PC-3 (cell line): ENCODE measurements at regions of chr11 and their contacts with region 1.

Region 1: DNA sequence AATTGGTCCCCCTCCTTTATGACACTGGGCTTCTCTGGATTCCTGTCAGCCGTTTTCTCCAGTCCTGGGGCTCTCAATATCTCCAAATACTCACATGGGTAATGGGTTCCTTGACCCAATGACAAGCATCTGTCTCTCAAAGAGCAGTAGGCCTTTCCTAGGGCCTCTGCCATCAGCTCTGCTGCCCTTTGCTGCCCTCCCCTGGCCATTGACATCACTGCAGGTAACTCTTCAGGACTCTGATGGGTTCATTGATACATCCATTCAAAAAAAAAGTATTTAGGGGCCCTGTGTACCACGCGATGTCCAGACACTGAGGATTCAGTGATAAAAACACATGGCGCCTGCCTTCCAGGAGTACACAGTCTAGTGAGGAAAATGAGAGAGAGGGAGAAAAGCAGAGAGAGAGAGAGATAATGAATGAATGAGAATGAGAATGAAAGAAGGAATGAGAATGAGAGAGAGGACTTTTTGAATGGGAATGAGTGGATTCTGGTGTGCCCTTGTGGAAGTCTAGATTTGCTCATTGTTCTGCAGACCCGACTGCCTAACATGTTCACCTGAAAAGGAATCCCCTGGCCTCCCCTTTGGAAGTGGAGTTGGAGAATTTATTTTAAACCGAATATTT is 42.6 kb upstream of the OLFML1 start:
- DNase-seq: peak; percentile 81
- ATAC-seq: peak; percentile 94
- H3K4me3 ChIP-seq: no peak overlapping the region
- H3K27ac ChIP-seq: no peak overlapping the region
- H3K4me1 ChIP-seq: no peaks in the 10 kb centered on the region
- H3K27me3 ChIP-seq: no peaks in the 10 kb centered on the region
- CTCF ChIP-seq: peak; percentile 92

Region 2: GRCh38 chr11:7098235-7098832 is 344.4 kb before region 1 on chr11:
- CTCF ChIA-PET with region 1: no interaction called
- POLR2A ChIA-PET with region 1: no interaction called
- intact Hi-C with region 1: loop called (anchors 1 kb)
- DNase-seq: peak; percentile 72
- ATAC-seq: peak; percentile 73
- H3K4me3 ChIP-seq: no peak overlapping the region
- H3K27ac ChIP-seq: no peak overlapping the region
- H3K4me1 ChIP-seq: no peaks in the 10 kb centered on the region
- H3K27me3 ChIP-seq: peaks cover 37% of the 10 kb centered on the region
- CTCF ChIP-seq: peak; percentile 86

Region 3: GRCh38 chr11:7143908-7144307 is 298.8 kb before region 1 on chr11:
- CTCF ChIA-PET with region 1: no interaction called
- POLR2A ChIA-PET with region 1: no interaction called
- intact Hi-C with region 1: loop called (anchors 1 kb)
- DNase-seq: peak; percentile 56
- ATAC-seq: peak; percentile 74
- H3K4me3 ChIP-seq: no peak overlapping the region
- H3K27ac ChIP-seq: no peak overlapping the region
- H3K4me1 ChIP-seq: no peaks in the 10 kb centered on the region
- H3K27me3 ChIP-seq: peaks cover 22% of the 10 kb centered on the region
- CTCF ChIP-seq: peak; percentile 72

Region 4: DNA sequence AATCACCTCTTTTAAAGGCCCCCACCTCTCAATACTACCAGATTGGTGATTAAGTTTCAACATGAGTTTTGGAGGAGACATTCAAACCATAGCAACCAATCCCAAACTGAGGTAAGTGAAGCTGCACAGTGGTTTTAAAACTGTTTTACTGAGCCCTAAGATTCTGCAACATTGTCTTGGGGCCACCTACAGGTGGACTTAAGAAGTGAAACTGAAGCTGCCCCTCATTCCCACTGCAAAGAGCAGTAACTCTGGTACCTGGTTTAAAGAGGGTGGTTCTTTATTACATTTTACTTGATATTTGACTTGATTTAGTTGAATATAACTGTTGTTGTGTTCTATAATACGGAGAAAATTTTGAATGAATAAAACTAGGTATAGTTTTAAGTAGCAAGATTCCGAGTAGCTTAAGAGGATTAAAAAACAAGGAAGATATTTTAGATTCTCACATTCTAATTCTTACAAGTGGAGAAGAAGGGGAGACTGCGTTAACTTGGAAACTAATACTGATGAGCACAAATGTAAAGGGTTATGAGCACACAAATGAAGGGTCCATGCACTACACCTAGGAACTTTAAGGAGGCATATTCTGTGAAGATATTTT is 164.3 kb before region 1 on chr11:
- CTCF ChIA-PET with region 1: no interaction called
- POLR2A ChIA-PET with region 1: no interaction called
- intact Hi-C with region 1: loop called (anchors 1 kb)
- DNase-seq: peak; percentile 69
- ATAC-seq: peak; percentile 68
- H3K4me3 ChIP-seq: no peak overlapping the region
- H3K27ac ChIP-seq: no peak overlapping the region
- H3K4me1 ChIP-seq: peaks cover 21% of the 10 kb centered on the region
- H3K27me3 ChIP-seq: no peaks in the 10 kb centered on the region
- CTCF ChIP-seq: peak; percentile 84

Region 5: GRCh38 chr11:7353100-7353499 is 89.6 kb before region 1 on chr11:
- CTCF ChIA-PET with region 1: interaction called, 6 read pairs
- POLR2A ChIA-PET with region 1: no interaction called
- intact Hi-C with region 1: loop called (anchors 1 kb)
- DNase-seq: peak; percentile 55
- ATAC-seq: peak; percentile 60
- H3K4me3 ChIP-seq: no peak overlapping the region
- H3K27ac ChIP-seq: no peak overlapping the region
- H3K4me1 ChIP-seq: peaks cover 8% of the 10 kb centered on the region
- H3K27me3 ChIP-seq: no peaks in the 10 kb centered on the region
- CTCF ChIP-seq: peak; percentile 70

Region 6: GRCh38 chr11:7413961-7414915 is 28.5 kb before region 1 on chr11:
- CTCF ChIA-PET with region 1: no interaction called
- POLR2A ChIA-PET with region 1: no interaction called
- intact Hi-C with region 1: loop called (anchors 2 kb)
- DNase-seq: peak; percentile 83
- ATAC-seq: peak; percentile 87
- H3K4me3 ChIP-seq: peak overlapping the region; percentile 33; the same call in 1 of the 2 replicates
- H3K27ac ChIP-seq: peak overlapping the region; percentile 57
- H3K4me1 ChIP-seq: peaks cover 45% of the 10 kb centered on the region
- H3K27me3 ChIP-seq: no peaks in the 10 kb centered on the region
- CTCF ChIP-seq: no peak